Activated CD4-positive, alpha-beta T cell treated with anti-CD3 and anti-CD28 coated beads for 36 hours (primary cell): ENCODE measurements at regions of chr2 and their contacts with region 1.

Region 1: DNA sequence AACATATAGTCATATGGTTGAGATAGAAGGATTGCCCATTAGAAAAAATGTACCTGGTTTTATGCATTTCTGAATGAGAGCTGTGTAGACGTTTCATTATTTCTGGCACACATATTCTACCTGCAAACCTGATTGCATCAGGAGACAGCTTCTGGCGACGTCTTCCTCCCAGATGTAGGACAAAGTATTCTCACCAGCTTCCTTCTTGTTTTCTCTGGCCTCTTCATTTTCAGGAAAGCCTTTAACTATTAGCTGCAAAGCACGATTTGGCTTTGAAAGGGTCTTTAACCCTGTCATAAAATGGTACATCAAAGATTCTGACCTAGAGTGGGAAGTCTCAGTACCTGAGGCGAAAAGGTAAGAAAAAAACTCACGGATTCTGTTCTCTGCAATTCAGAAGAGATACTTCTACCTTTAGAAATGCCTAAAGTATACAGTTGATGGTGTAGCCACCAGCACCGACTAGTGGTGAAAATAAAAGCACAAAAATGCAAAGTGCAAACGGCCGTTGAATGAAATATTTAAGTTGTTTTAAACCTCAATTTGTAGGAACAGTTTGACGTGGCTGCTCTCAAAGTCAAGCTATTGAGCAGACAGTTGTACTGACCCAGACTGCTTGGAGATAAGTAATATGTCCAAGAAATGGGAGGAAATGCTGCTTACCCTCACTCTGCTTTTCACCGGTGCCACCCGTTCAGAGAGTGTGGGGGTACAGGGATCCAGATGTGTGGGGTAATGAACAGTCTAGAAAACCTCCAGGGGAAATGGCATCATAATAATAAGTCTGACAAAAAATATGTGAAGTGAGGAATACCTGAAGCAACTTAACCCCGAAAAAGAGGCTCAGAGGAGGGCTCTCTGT is 20.2 kb downstream of the IL18RAP start:
- DNase-seq: peak; percentile 65
- ATAC-seq: peak; percentile 84
- H3K4me3 Mint-ChIP-seq: no peak overlapping the region
- H3K27ac Mint-ChIP-seq: peak overlapping the region; percentile 56
- H3K4me1 Mint-ChIP-seq: peaks cover 11% of the 10 kb centered on the region
- H3K27me3 Mint-ChIP-seq: no peaks in the 10 kb centered on the region

Region 2: DNA sequence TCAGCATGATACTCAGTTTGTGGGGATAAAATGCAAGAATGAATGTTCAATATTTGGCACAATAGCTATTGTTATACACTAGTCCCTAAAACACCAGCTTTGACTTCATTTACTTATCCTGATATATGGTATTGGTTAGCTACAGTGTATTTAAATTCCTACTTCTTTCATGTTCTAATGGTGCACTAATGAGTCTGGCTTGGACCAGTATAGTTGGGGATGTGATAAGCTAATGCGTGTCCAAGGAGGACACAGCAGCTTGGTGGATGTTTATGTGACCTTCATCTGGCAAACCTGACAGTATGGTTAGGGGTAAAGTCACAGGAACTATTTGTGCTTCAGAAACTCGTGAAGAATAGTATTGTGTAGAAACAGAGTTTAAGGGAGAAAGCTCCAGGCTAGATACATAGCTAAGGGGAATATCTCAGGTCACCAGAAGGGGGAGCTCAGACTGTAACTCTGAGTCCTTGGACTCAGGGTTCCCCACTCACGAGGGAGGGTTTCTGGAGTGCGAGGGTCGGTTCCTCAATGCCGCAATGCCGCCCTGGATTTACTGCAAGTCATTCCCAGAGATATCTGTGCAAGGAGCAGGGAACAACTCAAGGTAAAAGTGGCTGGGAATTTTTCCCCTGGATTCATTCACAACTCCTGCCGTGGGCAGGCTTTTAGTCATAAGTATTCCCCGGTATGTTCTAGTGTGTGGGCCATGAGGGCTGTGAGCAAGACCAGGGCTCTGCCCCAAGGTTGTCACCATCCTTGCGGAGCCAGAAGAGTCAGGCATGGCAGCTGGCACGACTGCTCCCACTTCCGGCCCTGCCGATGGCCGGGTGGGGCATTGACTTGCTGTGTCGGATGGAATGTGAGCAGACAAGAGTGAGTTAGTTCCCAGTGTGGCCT is 437.0 kb before region 1 on chr2:
- CTCF ChIA-PET with region 1: interaction called, 12 read pairs
- POLR2A ChIA-PET with region 1: no interaction called
- intact Hi-C with region 1: loop called (anchors 2 to 5 kb)
- DNase-seq: peak; percentile 67
- ATAC-seq: peak; percentile 27
- H3K4me3 Mint-ChIP-seq: peak overlapping the region; percentile 5
- H3K27ac Mint-ChIP-seq: peak overlapping the region; percentile 77
- H3K4me1 Mint-ChIP-seq: peaks cover 16% of the 10 kb centered on the region
- H3K27me3 Mint-ChIP-seq: no peaks in the 10 kb centered on the region

Region 3: GRCh38 chr2:102085238-102085637 is 358.0 kb before region 1 on chr2:
- CTCF ChIA-PET with region 1: no interaction called
- POLR2A ChIA-PET with region 1: no interaction called
- intact Hi-C with region 1: no loop called
- DNase-seq: no peak
- ATAC-seq: no peak
- H3K4me3 Mint-ChIP-seq: no peak overlapping the region
- H3K27ac Mint-ChIP-seq: no peak overlapping the region
- H3K4me1 Mint-ChIP-seq: peaks cover 57% of the 10 kb centered on the region
- H3K27me3 Mint-ChIP-seq: no peaks in the 10 kb centered on the region

Region 4: GRCh38 chr2:102251042-102251848 is 192.0 kb before region 1 on chr2:
- CTCF ChIA-PET with region 1: interaction called, 22 read pairs
- POLR2A ChIA-PET with region 1: no interaction called
- intact Hi-C with region 1: loop called (anchors 1 to 2 kb)
- DNase-seq: peak; percentile 85
- ATAC-seq: peak; percentile 68
- H3K4me3 Mint-ChIP-seq: peak overlapping the region; percentile 73
- H3K27ac Mint-ChIP-seq: peak overlapping the region; percentile 76
- H3K4me1 Mint-ChIP-seq: peaks cover 38% of the 10 kb centered on the region
- H3K27me3 Mint-ChIP-seq: no peaks in the 10 kb centered on the region

Region 5: GRCh38 chr2:102336502-102336945 is 106.7 kb before region 1 on chr2:
- CTCF ChIA-PET with region 1: interaction called, 11 read pairs
- POLR2A ChIA-PET with region 1: no interaction called
- intact Hi-C with region 1: no loop called
- DNase-seq: no peak
- ATAC-seq: peak; percentile 66
- H3K4me3 Mint-ChIP-seq: no peak overlapping the region
- H3K27ac Mint-ChIP-seq: no peak overlapping the region
- H3K4me1 Mint-ChIP-seq: peaks cover 15% of the 10 kb centered on the region
- H3K27me3 Mint-ChIP-seq: peaks cover 7% of the 10 kb centered on the region

Region 6: DNA sequence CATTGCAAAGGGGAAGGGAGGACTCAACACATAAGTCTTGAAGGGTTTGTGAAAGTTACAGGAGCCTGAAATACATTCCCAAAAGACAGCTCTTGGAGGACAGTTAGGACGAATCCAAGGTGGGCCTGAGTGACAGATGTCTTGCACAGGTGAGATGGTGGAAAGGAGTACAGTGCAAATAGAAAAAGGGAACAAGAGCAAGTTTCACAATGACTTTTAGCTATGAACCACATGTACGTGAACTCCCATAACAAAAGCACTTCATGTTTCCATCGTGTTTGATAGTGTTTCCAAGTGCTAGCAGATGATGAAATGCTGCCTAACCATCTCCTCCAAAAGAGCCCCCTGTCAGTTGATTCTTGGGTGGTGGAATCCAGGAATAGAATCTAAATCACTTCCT is 18.4 kb before region 1 on chr2:
- CTCF ChIA-PET with region 1: interaction called, 20 read pairs
- POLR2A ChIA-PET with region 1: no interaction called
- intact Hi-C with region 1: no loop called
- DNase-seq: no peak
- ATAC-seq: peak; percentile 65
- H3K4me3 Mint-ChIP-seq: peak overlapping the region; percentile 8
- H3K27ac Mint-ChIP-seq: no peak overlapping the region
- H3K4me1 Mint-ChIP-seq: peaks cover 56% of the 10 kb centered on the region
- H3K27me3 Mint-ChIP-seq: peaks cover 7% of the 10 kb centered on the region

Region 7: DNA sequence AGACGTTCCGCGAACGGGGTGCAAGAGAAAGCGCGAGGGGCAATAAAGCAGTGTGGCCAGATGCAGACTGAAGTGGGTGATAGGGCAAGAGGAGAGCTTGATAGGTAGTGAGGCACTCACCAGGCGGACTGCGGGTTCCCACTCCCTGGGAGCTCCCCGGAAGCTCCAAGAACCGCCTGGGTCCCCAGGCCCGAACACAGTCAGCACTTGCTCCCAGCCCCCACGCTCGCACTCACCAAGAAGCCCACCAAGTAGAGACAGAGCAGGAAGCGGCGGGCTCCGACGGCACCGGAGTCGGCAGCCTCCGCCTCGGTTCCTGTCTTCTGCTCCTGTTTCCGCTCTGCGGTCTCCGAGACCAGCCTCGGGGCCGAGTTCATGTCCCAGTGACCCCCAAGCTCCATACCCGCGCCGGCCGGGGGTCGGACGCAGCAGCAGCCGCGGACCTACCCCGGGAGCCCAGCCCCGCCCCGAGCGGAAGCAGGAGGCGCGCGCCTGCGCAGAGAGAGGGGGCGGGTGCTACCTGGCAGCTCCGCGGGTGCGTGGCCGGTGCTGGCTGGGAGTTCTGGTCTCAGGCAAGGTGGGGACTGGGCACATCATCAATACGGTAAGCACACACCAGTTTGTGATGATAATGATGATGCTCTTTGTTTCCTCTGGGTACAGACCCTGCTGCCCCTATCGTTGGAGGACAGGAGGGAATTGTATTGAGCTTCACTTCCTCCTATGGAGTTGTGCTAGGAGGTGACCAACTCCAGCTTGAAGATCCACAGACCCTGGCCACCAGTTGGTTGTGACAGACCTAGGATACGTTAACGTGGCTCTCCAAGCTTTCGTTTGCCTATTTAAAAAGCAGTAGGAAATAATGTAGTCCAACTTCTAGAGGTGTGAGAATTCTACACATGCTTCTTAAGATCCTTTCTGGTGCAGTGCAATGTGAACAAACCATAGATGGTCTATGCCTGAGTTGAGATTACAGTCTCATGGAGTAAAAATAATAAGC is 293.5 kb after region 1 on chr2:
- CTCF ChIA-PET with region 1: no interaction called
- POLR2A ChIA-PET with region 1: no interaction called
- intact Hi-C with region 1: no loop called
- DNase-seq: peak; percentile 91
- ATAC-seq: peak; percentile 94
- H3K4me3 Mint-ChIP-seq: peak overlapping the region; percentile 96
- H3K27ac Mint-ChIP-seq: peak overlapping the region; percentile 91
- H3K4me1 Mint-ChIP-seq: peaks cover 31% of the 10 kb centered on the region
- H3K27me3 Mint-ChIP-seq: no peaks in the 10 kb centered on the region